Right cardiac atrium (tissue), 5 donors: ENCODE measurements at regions of chr22 and their contacts with region 1.

Region 1: DNA sequence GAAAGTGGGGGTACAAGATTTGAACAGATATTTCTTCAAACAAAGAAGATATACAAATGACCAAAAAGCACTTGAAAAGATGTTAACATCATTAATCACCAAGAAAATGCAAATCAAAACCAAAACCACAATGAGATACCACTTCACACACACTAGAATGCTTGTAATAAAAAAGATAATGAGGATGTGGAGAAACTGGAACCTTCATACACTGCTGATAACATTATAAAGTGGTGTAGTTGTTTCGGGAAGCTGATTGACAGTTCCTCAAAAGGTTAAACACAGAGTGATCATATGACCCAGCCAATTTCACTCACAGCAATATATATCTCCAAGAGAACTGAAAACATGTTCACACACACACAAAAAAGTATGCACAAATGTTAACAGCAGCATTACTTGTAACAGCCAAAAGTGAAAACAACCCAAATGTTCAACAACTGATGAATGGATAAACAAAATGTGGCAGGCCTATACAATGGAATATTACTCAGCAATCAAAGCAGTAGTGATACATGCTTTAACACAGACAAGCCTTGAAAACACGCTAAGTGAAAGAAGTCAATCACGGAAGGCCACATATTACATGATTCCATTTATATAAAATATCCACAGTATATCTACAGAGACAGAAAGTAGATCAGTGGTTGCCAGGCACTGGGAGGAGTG is 15.1 kb downstream of the PITPNB start:
- DNase-seq: no peak
- ATAC-seq: no peak
- H3K4me3 ChIP-seq: no peak overlapping the region
- H3K27ac ChIP-seq: no peak overlapping the region
- H3K4me1 ChIP-seq: no peaks in the 10 kb centered on the region
- H3K27me3 ChIP-seq: no peaks in the 10 kb centered on the region

Region 2: DNA sequence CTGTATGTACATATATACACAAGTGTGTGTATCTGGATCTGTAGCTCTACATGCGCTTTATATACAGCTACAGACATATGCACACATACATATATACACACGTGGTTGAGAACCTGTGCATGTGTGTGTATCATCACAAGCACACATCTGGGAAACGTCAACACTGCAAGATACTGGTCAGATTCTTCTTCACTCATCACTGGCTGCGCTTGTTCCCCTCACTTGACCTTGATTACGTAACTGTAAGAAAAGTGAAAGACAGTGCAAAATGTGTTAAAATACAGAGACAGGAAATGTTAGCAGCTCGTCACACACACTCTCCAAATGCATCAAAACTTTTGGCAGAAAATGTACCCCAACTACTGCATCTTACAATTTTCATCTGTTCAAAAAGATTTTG is 50.5 kb before region 1 on chr22:
- intact Hi-C with region 1: no loop called
- DNase-seq: no peak
- ATAC-seq: peak; percentile 17 to 35
- H3K4me3 ChIP-seq: no peak overlapping the region
- H3K27ac ChIP-seq: no peak overlapping the region
- H3K4me1 ChIP-seq: peaks cover 8% of the 10 kb centered on the region
- H3K27me3 ChIP-seq: no peaks in the 10 kb centered on the region

Region 3: GRCh38 chr22:27962268-27963044 is 58.5 kb after region 1 on chr22:
- intact Hi-C with region 1: loop called in 1 of 4 experiments (anchors 10 kb)
- DNase-seq: peak in 2 of 3 donors; percentile 67 to 68
- ATAC-seq: peak; percentile 88 to 92
- H3K4me3 ChIP-seq: no peak overlapping the region
- H3K27ac ChIP-seq: no peak overlapping the region
- H3K4me1 ChIP-seq: peaks cover 3% of the 10 kb centered on the region
- H3K27me3 ChIP-seq: no peaks in the 10 kb centered on the region